PC-3 (cell line): ENCODE measurements at regions of chr3 and their contacts with region 1.

Region 1: GRCh38 chr3:191376516-191377141 is 46.3 kb upstream of the UTS2B start:
- DNase-seq: peak; percentile 91
- ATAC-seq: peak; percentile 93
- H3K4me3 ChIP-seq: peak overlapping the region; percentile 11; the same call in 1 of the 2 replicates
- H3K27ac ChIP-seq: peak overlapping the region; percentile 79
- H3K4me1 ChIP-seq: peaks cover 44% of the 10 kb centered on the region
- H3K27me3 ChIP-seq: no peaks in the 10 kb centered on the region
- CTCF ChIP-seq: no peak

Region 2: DNA sequence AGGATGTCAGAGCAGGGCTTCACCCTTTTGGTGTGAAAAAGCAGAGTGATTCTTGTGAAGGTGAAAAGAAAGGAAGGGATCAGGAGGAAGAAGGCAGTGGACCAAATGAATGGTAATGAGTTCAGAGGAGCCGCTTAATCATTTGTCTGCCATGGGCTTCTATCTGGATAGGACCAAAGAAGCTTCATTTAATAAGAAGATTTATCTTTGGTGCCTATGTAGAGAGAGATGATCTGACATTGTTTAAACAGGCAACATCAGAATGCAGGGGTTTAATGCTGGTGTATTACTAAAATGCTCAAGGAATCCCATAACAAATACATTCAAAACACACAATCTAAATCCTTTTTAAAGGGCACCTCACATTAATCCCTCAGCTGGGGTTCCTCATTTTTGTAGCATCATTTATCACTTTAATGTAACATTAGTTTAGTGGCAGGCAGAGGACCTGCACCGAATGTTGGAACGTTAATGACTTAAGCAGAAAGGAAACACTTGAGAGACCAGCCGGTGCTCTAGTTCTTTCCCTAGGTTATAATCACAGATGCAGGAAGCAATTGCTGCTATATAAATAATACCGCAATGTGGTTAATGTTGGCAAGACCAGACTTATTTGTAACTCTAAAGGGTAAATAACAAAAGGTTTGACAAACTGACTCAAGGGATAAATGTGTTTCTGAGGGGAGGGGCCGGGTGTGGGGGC is 890.6 kb before region 1 on chr3:
- CTCF ChIA-PET with region 1: no interaction called
- POLR2A ChIA-PET with region 1: no interaction called
- intact Hi-C with region 1: no loop called
- DNase-seq: peak; percentile 82
- ATAC-seq: peak; percentile 95
- H3K4me3 ChIP-seq: no peak overlapping the region; the same call in 1 of the 2 replicates
- H3K27ac ChIP-seq: no peak overlapping the region
- H3K4me1 ChIP-seq: peaks cover 16% of the 10 kb centered on the region
- H3K27me3 ChIP-seq: no peaks in the 10 kb centered on the region
- CTCF ChIP-seq: no peak

Region 3: GRCh38 chr3:190848870-190849269 is 527.8 kb before region 1 on chr3:
- CTCF ChIA-PET with region 1: no interaction called
- POLR2A ChIA-PET with region 1: no interaction called
- intact Hi-C with region 1: no loop called
- DNase-seq: peak; percentile 37
- ATAC-seq: no peak; the same call in 1 of the 2 replicates
- H3K4me3 ChIP-seq: no peak overlapping the region
- H3K27ac ChIP-seq: no peak overlapping the region
- H3K4me1 ChIP-seq: no peaks in the 10 kb centered on the region
- H3K27me3 ChIP-seq: peaks cover 3% of the 10 kb centered on the region; the same call in 1 of the 2 replicates
- CTCF ChIP-seq: no peak

Region 4: GRCh38 chr3:191066669-191067068 is 310.0 kb before region 1 on chr3:
- CTCF ChIA-PET with region 1: no interaction called
- POLR2A ChIA-PET with region 1: no interaction called
- intact Hi-C with region 1: loop called (anchors 10 kb)
- DNase-seq: peak; percentile 92
- ATAC-seq: peak; percentile 67
- H3K4me3 ChIP-seq: peak overlapping the region; percentile 25; the same call in 1 of the 2 replicates
- H3K27ac ChIP-seq: peak overlapping the region; percentile 95
- H3K4me1 ChIP-seq: peaks cover 69% of the 10 kb centered on the region
- H3K27me3 ChIP-seq: no peaks in the 10 kb centered on the region
- CTCF ChIP-seq: no peak

Region 5: DNA sequence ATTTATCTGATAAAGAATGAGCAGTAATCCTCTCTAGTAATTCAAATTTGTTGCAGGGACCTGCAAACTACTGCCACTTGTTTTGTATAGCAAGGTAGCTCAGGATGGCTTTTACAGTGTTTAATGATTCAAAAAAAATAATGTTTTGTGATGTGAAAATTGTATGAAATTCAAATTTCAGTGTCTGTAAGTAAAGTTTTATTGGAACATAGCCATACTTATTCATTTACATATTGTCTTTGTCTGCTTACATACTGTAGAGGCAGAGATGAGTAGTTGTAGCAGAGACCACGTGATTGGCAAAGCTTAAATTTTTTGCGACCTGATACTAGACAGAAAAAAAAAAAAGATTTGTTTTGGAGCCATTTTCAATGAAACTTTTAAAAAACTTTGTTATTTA is 39.8 kb before region 1 on chr3:
- CTCF ChIA-PET with region 1: no interaction called
- POLR2A ChIA-PET with region 1: interaction called, 4 read pairs
- intact Hi-C with region 1: loop called (anchors 1 kb)
- DNase-seq: no peak
- ATAC-seq: no peak
- H3K4me3 ChIP-seq: no peak overlapping the region
- H3K27ac ChIP-seq: 0 out of 2 replicates have a peak overlapping the region, but pooled peaks have one; percentile 4
- H3K4me1 ChIP-seq: peaks cover 78% of the 10 kb centered on the region
- H3K27me3 ChIP-seq: no peaks in the 10 kb centered on the region
- CTCF ChIP-seq: no peak

Region 6: DNA sequence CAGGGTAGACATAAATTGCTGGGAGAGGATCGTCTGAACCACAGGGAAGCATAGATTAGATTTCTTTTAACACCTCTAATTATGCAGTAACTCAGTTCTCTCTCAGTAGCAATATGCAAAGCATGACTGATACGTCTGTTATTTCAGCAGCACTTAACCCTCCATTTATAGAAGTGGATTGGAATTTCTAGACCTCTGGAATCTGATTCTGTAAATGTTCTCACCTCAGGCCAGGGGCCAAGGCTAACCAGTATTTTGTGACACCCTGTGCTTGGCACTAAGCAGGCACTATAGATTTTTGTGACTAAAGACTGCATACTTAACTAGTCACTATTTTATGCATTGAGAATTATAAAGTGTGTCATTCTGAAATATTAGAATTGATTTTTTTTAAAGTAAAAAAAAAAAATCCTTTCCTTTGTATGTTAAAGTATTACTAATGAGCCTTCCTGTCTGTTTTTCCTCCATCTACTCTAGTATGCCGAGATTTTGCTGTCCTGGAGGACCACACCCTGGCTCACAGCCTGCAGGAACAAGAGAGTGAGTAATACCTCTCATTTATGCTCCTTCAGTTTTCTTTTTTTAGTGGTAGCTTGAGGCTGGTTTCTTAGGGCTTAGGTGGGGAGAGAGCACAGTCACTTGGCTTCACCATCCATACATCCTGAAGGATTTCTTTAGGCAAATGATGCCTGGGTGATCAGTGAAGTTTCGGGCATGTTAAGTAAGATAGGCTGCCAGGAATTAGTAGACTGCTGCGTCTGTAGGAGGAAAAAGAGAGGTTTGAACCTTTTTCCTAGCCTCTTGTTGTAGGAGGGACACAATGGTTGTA is 19.8 kb before region 1 on chr3:
- CTCF ChIA-PET with region 1: no interaction called
- POLR2A ChIA-PET with region 1: no interaction called
- intact Hi-C with region 1: loop called (anchors 1 kb)
- DNase-seq: peak; percentile 77
- ATAC-seq: peak; percentile 79
- H3K4me3 ChIP-seq: no peak overlapping the region
- H3K27ac ChIP-seq: peak overlapping the region; percentile 51
- H3K4me1 ChIP-seq: peaks cover 57% of the 10 kb centered on the region
- H3K27me3 ChIP-seq: no peaks in the 10 kb centered on the region
- CTCF ChIP-seq: no peak